Common myeloid progenitor, CD34-positive (primary cell): ENCODE measurements at regions of chr2 and their contacts with region 1.

Region 1: GRCh38 chr2:169141713-169142352 is 72.5 kb downstream of the DHRS9 start:
- DNase-seq: peak; percentile 44 to 66 (median 54)
- H3K4me3 ChIP-seq: peak overlapping the region in 1 of 7 experiments; percentile 9
- H3K27ac ChIP-seq: no peak overlapping the region
- H3K4me1 ChIP-seq: peaks cover 0 to 17% (median 7%) of the 10 kb centered on the region in 4 experiments
- H3K27me3 ChIP-seq: no peaks in the 10 kb centered on the region

Region 2: GRCh38 chr2:168671932-168672331 is 469.9 kb before region 1 on chr2:
- CTCF ChIA-PET with region 1: no interaction called
- POLR2A ChIA-PET with region 1: no interaction called
- DNase-seq: no peak
- H3K4me3 ChIP-seq: no peak overlapping the region
- H3K27ac ChIP-seq: no peak overlapping the region
- H3K4me1 ChIP-seq: peaks cover 0 to 11% (median 2%) of the 10 kb centered on the region in 4 experiments
- H3K27me3 ChIP-seq: no peaks in the 10 kb centered on the region

Region 3: GRCh38 chr2:169159686-169160085 is 17.9 kb after region 1 on chr2:
- CTCF ChIA-PET with region 1: interaction called, 18 read pairs
- POLR2A ChIA-PET with region 1: no interaction called
- DNase-seq: no peak
- H3K4me3 ChIP-seq: no peak overlapping the region
- H3K27ac ChIP-seq: no peak overlapping the region
- H3K4me1 ChIP-seq: no peaks in the 10 kb centered on the region
- H3K27me3 ChIP-seq: no peaks in the 10 kb centered on the region